Mammary epithelial cell (primary cell): ENCODE measurements at regions of chr5 and their contacts with region 1.

Region 1: GRCh38 chr5:54663866-54664265 is 146.3 kb downstream of the SNX18 start:
- DNase-seq: peak; percentile 79
- H3K4me3 ChIP-seq: no peak overlapping the region
- H3K27ac ChIP-seq: no peak overlapping the region
- H3K4me1 ChIP-seq: peaks cover 5% of the 10 kb centered on the region
- H3K27me3 ChIP-seq: no peaks in the 10 kb centered on the region
- CTCF ChIP-seq: no peak

Region 2: GRCh38 chr5:54696931-54697330 is 33.1 kb after region 1 on chr5:
- CTCF ChIA-PET with region 1: no interaction called
- dilution Hi-C with region 1: loop called (anchors 5 kb)
- in situ Hi-C with region 1: no loop called
- intact Hi-C with region 1: no loop called
- DNase-seq: no peak
- H3K4me3 ChIP-seq: no peak overlapping the region
- H3K27ac ChIP-seq: no peak overlapping the region
- H3K4me1 ChIP-seq: peaks cover 14% of the 10 kb centered on the region
- H3K27me3 ChIP-seq: no peaks in the 10 kb centered on the region
- CTCF ChIP-seq: no peak